ENCODE measurements at regions of chr11 and their contacts with region 1.

Region 1: DNA sequence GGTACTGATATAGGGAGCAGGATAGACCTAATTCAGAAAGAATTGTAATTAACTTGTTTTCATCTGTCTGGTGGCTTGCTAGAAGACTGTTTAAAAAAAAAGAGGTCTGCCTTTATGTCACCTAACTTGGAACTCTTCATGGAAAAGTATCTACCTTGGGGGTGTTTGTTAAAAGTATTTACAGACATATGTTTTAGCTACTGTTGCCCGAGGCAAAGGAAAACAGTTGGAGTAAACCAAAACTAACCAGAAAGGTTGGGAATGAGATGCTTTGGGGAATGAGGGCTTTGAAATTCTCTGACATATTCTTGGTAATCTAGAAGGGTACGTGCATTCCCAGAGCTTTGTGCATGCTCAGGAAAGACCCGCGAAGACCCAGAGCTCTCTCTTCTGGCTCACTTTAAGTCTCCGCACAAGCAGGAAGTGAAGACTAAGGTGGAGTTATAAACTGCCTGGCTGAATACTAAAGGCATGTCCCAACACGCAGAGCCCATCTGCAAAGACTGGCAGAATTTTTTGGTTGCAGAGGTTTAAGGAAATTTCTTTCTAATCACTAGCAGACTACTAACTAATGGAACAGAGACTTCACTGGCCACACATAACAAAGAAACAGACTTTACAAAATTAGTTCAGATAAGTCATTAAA is 33.2 kb downstream of the HIKESHI start:
- DNase-seq: no peak
- H3K4me3 ChIP-seq: no peak overlapping the region
- H3K27ac ChIP-seq: no peak overlapping the region
- H3K4me1 ChIP-seq: no peaks in the 10 kb centered on the region
- H3K27me3 ChIP-seq: no peaks in the 10 kb centered on the region
- CTCF ChIP-seq: no peak

Region 2: DNA sequence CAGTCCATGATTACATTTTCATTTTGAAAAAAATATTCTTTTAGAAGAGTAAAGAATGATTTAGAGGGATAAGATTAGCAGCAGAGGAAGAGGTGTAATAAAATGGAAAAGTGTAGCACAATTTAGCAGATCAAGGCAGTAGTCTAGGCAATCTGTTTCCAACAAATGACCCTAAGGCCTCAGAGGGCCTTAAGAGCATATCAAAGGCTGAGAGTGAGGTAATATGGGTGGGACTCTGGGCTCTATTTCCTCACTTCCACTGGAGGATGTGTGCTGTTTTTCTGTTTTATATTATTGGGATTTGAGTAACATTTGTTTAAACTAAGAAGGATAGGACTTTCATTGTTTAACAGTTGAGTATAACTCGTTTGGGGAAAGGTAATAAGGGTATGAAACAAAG is 68.2 kb after region 1 on chr11:
- CTCF ChIA-PET with region 1: no interaction called
- POLR2A ChIA-PET with region 1: no interaction called
- intact Hi-C with region 1: no loop called
- DNase-seq: no peak
- H3K4me3 ChIP-seq: no peak overlapping the region
- H3K27ac ChIP-seq: no peak overlapping the region
- H3K4me1 ChIP-seq: no peaks in the 10 kb centered on the region
- H3K27me3 ChIP-seq: no peaks in the 10 kb centered on the region
- CTCF ChIP-seq: no peak

Region 3: GRCh38 chr11:86910592-86910991 is 575.3 kb after region 1 on chr11:
- CTCF ChIA-PET with region 1: no interaction called
- POLR2A ChIA-PET with region 1: interaction called, 10 read pairs
- intact Hi-C with region 1: no loop called
- DNase-seq: peak in 1 of 2 experiments; percentile 80
- H3K4me3 ChIP-seq: no peak overlapping the region
- H3K27ac ChIP-seq: peak overlapping the region; percentile 59
- H3K4me1 ChIP-seq: peaks cover 25% of the 10 kb centered on the region
- H3K27me3 ChIP-seq: no peaks in the 10 kb centered on the region
- CTCF ChIP-seq: no peak

Measured in PC-9 (cell line).